PC-3 (cell line): ENCODE measurements at regions of chrX and their contacts with region 1.

Region 1: DNA sequence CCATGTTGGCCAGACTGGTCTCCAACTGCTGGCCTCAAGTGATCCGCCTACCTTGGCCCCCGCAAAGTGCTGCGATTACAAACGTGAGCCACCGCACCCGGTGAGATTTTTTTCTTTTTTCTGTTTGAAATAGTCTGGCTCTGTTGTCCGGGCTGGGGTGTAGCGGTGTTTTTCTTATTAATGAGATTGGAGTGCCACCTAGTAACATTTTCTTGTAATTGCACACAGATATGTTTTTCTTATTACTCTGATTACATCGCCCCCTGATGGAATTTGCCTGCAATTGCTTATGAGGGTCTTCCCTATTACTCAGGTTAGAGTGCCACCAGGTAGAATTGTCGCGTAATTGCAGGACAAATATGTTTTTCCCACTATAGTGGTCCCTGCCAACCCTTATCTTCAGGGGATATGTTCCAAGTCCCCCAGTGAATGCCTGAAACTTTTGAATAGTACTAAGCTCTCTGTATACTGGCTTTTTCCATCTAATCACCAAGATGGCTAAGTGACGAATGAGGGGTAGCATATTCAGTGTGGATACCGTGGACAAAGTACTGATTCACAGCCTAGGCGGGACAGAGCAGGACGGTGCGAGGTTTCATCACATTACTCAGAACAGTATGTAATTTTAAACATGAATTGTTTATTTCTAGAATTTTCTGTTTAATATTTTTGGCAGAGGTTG is 8.6 kb upstream of the PDHA1 start:
- DNase-seq: peak; percentile 55
- ATAC-seq: no peak
- H3K4me3 ChIP-seq: no peak overlapping the region
- H3K27ac ChIP-seq: no peak overlapping the region
- H3K4me1 ChIP-seq: no peaks in the 10 kb centered on the region
- H3K27me3 ChIP-seq: no peaks in the 10 kb centered on the region
- CTCF ChIP-seq: peak; percentile 63

Region 2: DNA sequence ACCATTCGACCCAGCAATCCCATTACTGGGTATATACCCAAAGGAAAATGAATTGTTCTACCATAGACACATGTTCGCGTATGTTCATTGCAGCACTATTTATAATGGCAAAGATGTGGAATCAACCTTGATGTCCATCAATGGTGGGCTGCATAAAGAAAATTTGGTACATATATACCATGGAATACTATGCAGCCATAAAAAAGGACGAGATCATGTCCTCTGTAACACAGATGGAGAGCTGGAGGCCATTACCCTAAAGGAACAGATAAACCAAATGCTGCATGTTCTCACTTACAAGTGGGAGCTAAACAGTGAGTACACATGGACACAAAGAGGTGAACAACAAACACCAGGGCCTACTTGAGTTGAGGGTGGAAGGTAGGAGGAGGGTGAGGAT is 1025.7 kb before region 1 on chrX:
- CTCF ChIA-PET with region 1: no interaction called
- POLR2A ChIA-PET with region 1: no interaction called
- intact Hi-C with region 1: no loop called
- DNase-seq: no peak
- ATAC-seq: no peak
- H3K4me3 ChIP-seq: no peak overlapping the region
- H3K27ac ChIP-seq: no peak overlapping the region
- H3K4me1 ChIP-seq: no peaks in the 10 kb centered on the region
- H3K27me3 ChIP-seq: no peaks in the 10 kb centered on the region
- CTCF ChIP-seq: no peak

Region 3: DNA sequence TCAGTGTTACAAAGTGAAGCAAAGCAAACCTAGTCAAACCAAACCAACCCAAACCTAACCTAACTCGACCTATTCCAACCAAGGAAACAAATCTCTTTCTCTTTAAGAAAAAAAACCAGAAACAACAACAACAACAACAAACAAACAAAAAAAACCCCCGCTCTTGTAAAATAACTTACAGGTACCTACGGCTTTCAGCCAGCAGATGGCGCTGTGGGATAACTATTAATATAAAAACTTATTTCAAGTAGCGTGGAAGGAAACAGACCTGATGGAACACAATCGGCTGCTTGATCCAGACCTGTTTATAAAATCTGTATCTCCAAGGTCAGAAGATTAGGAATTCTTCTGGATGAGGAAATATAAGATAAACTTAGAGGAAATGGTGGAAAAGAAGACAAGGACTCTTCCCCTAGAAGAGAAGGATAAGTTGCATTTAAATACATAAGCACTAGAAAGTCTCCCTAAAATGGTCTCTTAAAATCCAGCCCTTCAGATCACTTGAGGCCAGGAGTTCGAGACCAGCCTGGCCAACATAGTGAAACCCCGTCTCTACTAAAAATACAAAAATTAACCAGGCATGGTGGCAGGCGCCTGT is 944.0 kb before region 1 on chrX:
- CTCF ChIA-PET with region 1: interaction called, 3 read pairs
- POLR2A ChIA-PET with region 1: no interaction called
- intact Hi-C with region 1: loop called (anchors 1 kb)
- DNase-seq: peak; percentile 67
- ATAC-seq: peak; percentile 54; the same call in 1 of the 2 replicates
- H3K4me3 ChIP-seq: no peak overlapping the region
- H3K27ac ChIP-seq: no peak overlapping the region
- H3K4me1 ChIP-seq: no peaks in the 10 kb centered on the region
- H3K27me3 ChIP-seq: no peaks in the 10 kb centered on the region
- CTCF ChIP-seq: peak; percentile 78

Region 4: GRCh38 chrX:18931972-18932371 is 403.1 kb before region 1 on chrX:
- CTCF ChIA-PET with region 1: no interaction called
- POLR2A ChIA-PET with region 1: no interaction called
- intact Hi-C with region 1: loop called (anchors 1 kb)
- DNase-seq: peak; percentile 58
- ATAC-seq: peak; percentile 54
- H3K4me3 ChIP-seq: no peak overlapping the region
- H3K27ac ChIP-seq: no peak overlapping the region
- H3K4me1 ChIP-seq: no peaks in the 10 kb centered on the region
- H3K27me3 ChIP-seq: no peaks in the 10 kb centered on the region
- CTCF ChIP-seq: peak; percentile 78

Region 5: GRCh38 chrX:19017271-19017670 is 317.8 kb before region 1 on chrX:
- CTCF ChIA-PET with region 1: interaction called, 14 read pairs
- POLR2A ChIA-PET with region 1: no interaction called
- intact Hi-C with region 1: loop called (anchors 1 kb)
- DNase-seq: peak; percentile 63
- ATAC-seq: peak; percentile 87
- H3K4me3 ChIP-seq: no peak overlapping the region
- H3K27ac ChIP-seq: no peak overlapping the region
- H3K4me1 ChIP-seq: peaks cover 13% of the 10 kb centered on the region
- H3K27me3 ChIP-seq: no peaks in the 10 kb centered on the region
- CTCF ChIP-seq: peak; percentile 85

Region 6: DNA sequence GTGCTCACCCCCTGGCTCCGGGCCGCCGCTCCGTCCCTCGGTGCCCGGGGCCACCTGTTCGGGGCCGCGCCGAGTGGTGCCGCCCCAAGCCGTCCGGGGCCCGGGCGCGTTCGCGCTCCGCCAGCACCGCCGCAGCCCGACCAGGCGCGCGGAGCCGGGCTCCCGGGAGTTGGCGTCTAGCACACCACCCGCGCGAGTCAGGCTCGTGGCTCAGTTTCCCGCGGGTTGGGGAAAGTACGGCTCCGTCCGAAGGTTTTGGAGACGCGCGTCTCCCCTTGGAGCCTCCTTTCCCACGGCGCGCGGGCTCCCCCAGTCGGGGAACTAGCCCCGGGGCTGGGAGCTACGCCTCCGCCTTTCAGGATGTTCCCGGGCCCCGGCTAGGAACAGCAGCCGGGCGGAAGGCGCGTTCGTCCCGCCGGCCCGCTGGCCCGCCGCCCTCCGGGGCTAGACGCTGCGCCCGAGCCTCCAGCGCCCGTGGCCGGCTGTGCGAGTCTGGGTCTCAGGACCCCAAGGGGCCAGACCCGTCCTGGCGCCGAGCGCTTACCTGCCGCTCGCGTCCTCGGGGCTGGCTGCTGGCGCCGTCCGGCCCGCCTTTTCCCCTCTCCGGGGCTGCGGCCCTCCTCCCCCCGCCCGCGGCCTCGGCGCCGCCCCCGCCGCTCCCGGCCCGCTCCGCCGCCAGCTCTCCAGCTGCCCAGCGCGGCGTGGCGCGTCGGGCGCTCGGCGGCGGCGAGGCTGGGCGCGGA is 213.0 kb before region 1 on chrX and contains the start of gene ADGRG2:
- CTCF ChIA-PET with region 1: interaction called, 8 read pairs
- POLR2A ChIA-PET with region 1: no interaction called
- intact Hi-C with region 1: loop called (anchors 5 kb)
- DNase-seq: peak; percentile 48
- ATAC-seq: peak; percentile 86
- H3K4me3 ChIP-seq: peak within 1 kb of the TSS; percentile 67
- H3K27ac ChIP-seq: no peak within 1 kb of the TSS
- H3K4me1 ChIP-seq: no peaks in the 10 kb centered on the region
- H3K27me3 ChIP-seq: peaks cover 20% of the 10 kb centered on the region
- CTCF ChIP-seq: 0 out of 2 replicates have a peak, but pooled peaks have one; percentile 25
- total RNA-seq, gene ADGRG2: 1.1 and 1.4 TPM in 2 replicates

Region 7: DNA sequence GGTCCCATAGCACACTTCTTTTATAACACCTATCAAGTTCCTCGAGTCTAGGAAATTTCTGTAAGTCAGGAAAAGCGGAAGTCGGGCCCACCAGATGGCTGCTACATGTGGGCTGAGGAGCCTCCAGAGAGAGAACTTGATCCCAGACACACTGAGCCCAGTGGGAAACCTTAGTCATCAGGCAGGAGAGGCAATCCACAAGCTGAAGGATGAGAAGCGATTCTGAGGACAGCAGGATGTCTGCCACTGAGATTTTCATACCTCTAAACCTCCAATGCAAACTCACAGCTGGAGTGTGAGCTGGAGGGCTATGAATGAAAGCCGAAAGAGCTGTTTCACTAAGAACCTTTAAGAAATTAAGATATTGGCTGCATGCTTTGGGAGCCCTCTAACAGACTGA is 44.0 kb before region 1 on chrX:
- CTCF ChIA-PET with region 1: no interaction called
- POLR2A ChIA-PET with region 1: no interaction called
- intact Hi-C with region 1: no loop called
- DNase-seq: no peak
- ATAC-seq: no peak
- H3K4me3 ChIP-seq: no peak overlapping the region
- H3K27ac ChIP-seq: no peak overlapping the region
- H3K4me1 ChIP-seq: no peaks in the 10 kb centered on the region
- H3K27me3 ChIP-seq: peaks cover 34% of the 10 kb centered on the region
- CTCF ChIP-seq: no peak

Region 8: DNA sequence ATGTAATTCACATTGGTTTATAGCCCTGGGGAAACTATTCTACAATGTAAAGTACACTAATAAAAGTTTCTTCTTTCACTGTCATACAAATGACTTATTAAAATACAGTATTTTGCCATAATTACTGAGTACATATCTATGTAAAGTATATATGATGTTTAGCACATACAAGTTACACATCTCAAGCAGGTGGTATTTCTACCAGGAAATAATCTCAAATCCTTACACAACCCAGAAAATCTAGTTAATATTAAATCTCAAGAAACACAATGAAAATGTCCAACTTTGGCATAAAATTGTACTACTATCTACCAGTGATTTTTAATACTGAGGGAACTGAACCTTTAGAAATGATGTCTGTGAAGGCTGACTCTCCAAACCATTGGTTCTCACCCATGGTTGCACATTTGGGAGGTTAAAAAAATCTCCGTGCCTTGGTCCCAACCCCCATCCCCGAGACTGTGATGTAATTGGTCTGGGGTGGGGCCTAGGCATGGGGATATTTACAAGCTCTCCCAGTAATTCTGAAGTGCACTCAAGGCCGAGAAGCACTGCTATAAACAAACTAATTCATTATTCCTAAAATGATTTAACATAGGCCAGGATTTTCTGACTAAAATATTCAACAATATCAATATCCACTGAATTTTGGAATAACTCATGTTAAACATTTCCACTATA is 152.6 kb after region 1 on chrX:
- CTCF ChIA-PET with region 1: no interaction called
- POLR2A ChIA-PET with region 1: no interaction called
- intact Hi-C with region 1: no loop called
- DNase-seq: no peak
- ATAC-seq: no peak
- H3K4me3 ChIP-seq: no peak overlapping the region
- H3K27ac ChIP-seq: no peak overlapping the region
- H3K4me1 ChIP-seq: no peaks in the 10 kb centered on the region
- H3K27me3 ChIP-seq: no peaks in the 10 kb centered on the region
- CTCF ChIP-seq: no peak